GM10248 (cell line): ENCODE measurements at regions of chr4 and their contacts with region 1.

Region 1: GRCh38 chr4:71270901-71271300 is 67.9 kb upstream of the SLC4A4 start:
- DNase-seq: no peak
- CTCF ChIP-seq: peak; percentile 29

Region 2: DNA sequence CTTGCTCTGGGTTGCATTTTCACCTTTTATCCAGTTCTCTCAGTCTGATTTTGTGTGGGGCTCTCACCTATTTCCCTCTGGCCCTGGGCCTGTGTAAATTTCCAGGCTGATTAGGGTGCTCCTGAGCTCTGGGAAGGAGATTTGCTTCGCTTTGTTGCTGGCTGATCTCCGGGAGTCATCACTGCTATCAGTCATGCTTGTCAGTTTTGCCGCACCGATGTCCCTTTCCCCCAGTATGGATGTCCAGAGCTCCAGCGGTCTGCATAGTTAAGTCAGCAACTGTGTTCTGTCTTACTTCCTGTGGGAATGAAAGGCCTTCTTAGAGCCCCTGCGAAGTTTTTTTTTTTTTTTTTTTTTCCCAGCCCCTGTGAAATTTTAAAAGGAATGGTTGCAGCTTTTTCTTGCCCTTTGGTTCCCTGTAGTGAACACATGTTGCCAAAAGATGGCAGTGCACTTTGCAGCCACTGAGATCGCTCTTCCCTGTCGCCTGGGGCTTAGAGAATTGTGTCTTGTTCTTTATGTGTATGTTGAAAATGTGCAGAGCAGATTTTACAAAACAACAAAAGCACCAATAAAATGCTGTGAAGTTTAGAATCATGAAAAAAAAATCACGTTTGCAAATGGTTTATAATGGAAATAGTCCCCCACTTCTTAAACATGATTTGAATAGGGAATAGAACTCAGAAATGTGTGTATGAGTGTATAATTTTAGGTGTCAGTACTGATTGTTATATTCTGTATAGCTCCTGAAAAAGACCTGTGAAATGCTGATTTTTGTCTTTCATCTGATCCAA is 41.2 kb before region 1 on chr4:
- CTCF ChIA-PET with region 1: interaction called, 10 read pairs
- POLR2A ChIA-PET with region 1: no interaction called
- DNase-seq: peak; percentile 39
- CTCF ChIP-seq: peak; percentile 55

Region 3: DNA sequence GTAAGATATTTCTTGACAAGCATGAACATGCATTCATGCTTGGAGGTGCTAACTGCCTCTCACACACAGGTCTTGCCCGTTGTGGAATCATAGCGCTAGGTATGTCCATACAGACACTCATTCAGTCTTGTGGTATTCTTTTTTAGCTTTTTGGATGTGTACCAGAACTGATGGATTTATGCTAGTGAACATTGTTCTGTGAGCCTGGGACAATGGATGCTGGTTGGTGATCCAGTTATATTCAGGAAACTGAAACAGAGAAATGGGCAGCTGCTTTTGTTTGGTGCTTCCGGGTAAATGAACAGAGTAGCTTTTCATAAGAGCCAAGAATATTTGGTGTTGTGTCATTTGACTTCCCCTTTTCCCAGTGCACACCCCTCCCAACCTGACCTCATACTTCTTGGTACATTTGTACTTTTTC is 11.0 kb before region 1 on chr4:
- CTCF ChIA-PET with region 1: interaction called, 27 read pairs
- POLR2A ChIA-PET with region 1: no interaction called
- DNase-seq: no peak
- CTCF ChIP-seq: no peak

Region 4: GRCh38 chr4:71283642-71284257 is 12.8 kb after region 1 on chr4:
- CTCF ChIA-PET with region 1: interaction called, 12 read pairs
- POLR2A ChIA-PET with region 1: no interaction called
- DNase-seq: no peak
- CTCF ChIP-seq: no peak

Region 5: GRCh38 chr4:71709961-71710360 is 439.1 kb after region 1 on chr4:
- CTCF ChIA-PET with region 1: interaction called, 27 read pairs
- POLR2A ChIA-PET with region 1: no interaction called
- DNase-seq: no peak
- CTCF ChIP-seq: no peak